GM13976 (cell line): ENCODE measurements at regions of chr17 and their contacts with region 1.

Region 1: DNA sequence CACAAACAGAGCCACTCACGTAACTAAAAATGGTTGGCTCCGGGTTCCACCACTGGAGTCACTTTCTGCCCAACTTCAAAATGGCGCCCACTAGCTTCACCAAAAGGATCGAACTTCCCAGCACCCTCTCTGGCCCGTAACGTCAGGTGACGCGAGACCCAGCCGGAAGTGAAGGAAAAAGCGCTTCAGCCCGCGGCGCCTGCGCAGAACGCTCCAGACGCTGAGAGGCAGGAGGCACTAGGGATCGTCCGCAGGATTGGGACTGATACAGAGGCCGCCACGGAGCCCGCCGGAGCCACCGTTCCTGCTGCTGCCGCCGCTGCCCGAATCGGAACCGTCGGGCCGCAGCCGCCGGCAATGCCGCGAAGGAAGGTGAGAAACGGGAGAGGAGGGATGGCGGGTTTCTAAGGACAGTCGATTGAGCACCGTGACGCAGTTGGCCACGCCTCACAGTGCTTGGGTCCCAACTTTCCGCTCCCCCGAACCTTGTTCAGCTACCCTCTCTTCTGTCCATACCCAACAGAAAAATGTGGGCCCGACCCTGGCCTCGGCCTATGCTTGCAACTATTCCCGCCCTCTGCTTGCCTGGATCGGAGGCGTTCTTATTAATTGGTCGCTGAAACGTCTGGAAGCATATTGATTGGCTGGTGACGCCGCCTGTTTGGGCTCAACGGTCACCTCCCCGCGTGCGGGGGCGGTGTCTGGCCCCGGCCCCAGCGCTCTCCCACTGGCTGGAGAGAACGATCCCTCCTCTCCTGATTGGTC is at the start of gene KAT7:
- DNase-seq: peak; percentile 97
- CTCF ChIP-seq: peak; percentile 16

Region 2: DNA sequence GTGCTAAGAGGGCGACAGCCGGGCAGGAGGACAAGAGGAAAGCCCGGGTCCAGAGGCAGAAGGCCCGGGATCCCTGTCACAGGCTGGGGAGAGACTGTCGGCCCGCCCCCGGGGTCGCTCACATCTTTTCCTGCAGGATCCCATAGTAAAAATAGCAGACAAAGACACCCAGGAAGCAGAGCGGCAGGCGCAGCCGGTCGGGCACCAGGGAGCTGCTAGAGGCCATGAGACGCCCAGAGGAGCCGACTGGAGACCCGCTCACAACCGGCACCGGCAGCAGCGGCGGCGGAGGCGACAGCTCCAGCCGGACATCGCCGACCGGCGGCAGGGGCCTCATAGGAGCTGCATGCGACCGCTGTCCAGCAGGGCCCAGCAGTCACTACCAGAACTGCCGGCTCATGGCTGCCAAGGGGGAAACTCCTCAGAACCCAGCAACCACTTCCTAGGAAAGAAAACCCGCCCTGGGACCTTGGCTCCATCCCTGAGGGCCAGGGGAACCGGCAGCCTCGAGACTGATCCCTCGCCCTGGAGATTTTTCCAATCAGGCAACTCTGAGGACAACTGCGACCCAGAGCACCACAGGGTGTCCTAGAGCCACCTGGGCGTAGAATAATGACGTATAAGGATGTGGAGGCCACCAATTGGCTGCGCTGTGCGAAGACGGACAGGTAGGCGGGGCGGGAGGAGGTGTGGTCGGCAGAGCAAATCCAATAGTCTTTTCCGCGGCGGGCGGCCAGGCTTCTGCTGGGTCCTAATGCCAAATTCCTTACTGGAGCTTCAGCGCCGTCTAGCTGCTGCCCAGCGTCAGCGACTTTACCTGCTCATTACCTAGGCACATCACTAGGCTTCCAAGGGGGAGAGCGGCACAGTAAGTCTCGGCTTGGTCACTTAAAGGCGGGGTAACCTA is 80.8 kb before region 1 on chr17 and contains the start of gene SLC35B1:
- in situ Hi-C with region 1: loop called (anchors 10 kb)
- DNase-seq: peak; percentile 99
- CTCF ChIP-seq: peak; percentile 96